IMR-90 (cell line): ENCODE measurements at regions of chr11 and their contacts with region 1.

Region 1: DNA sequence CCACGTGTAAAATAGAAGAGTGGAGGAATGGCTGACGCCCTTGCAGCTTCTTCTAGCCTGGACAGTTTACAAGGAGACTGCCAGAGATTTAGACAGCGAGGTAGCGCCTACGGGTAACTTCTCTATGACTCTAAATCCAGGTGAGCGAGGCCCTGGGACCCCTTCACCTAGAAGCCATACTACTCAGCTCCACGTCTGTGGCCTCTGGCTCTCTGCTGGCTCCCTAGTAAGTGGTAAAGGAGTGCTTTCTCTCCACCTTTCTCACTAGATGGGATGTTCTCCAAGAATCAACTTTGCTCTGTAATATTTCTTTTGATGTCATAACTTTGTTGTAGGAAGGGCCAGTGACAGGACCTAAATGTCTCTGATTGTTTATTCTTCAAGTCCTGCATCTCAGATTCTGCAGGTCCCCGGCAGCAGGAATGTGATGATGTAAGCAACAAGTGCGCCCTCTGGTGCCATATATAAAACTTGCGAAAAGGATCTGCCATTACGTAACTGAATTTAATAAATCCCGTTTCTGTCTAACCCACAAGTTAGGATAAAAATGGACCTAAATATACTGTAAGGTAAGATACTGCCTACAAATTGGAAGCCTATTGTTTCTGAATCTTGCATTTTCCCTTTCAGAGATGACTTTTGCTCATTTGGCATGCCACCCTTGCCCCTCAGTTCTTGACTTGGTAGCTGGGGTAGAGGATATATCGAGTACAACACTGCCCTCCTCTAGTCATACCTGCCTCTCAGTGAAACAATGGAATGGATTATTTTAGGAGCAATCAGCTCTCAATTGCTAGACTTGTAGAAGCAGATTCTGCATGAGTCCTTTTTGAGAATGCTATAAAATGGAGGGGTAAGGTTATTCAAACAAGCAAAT is 11.0 kb upstream of the PTPN5 start:
- DNase-seq: peak; percentile 71
- ATAC-seq: peak; percentile 71
- H3K4me3 ChIP-seq: no peak overlapping the region
- H3K27ac ChIP-seq: no peak overlapping the region
- H3K4me1 ChIP-seq: no peaks in the 10 kb centered on the region
- H3K27me3 ChIP-seq: peaks cover 2% of the 10 kb centered on the region; the same call in 1 of the 2 replicates
- CTCF ChIP-seq: peak; percentile 68
- POLR2A ChIP-seq: no peak
- RAD21 ChIP-seq: peak; percentile 49

Region 2: GRCh38 chr11:18115360-18116127 is 687.1 kb before region 1 on chr11:
- CTCF ChIA-PET with region 1: interaction called, 3 read pairs
- POLR2A ChIA-PET with region 1: no interaction called
- dilution Hi-C with region 1: no loop called
- in situ Hi-C with region 1: no loop called
- intact Hi-C with region 1: loop called (anchors 1 kb)
- DNase-seq: peak; percentile 55
- ATAC-seq: peak; percentile 97
- H3K4me3 ChIP-seq: no peak overlapping the region
- H3K27ac ChIP-seq: no peak overlapping the region
- H3K4me1 ChIP-seq: no peaks in the 10 kb centered on the region
- H3K27me3 ChIP-seq: peaks cover 11% of the 10 kb centered on the region
- CTCF ChIP-seq: peak; percentile 82
- POLR2A ChIP-seq: no peak
- RAD21 ChIP-seq: peak; percentile 80

Region 3: GRCh38 chr11:18775492-18776292 is 26.9 kb before region 1 on chr11:
- CTCF ChIA-PET with region 1: no interaction called
- POLR2A ChIA-PET with region 1: no interaction called
- dilution Hi-C with region 1: no loop called
- in situ Hi-C with region 1: no loop called
- intact Hi-C with region 1: loop called (anchors 1 kb)
- DNase-seq: peak; percentile 31
- ATAC-seq: peak; percentile 66
- H3K4me3 ChIP-seq: no peak overlapping the region
- H3K27ac ChIP-seq: no peak overlapping the region
- H3K4me1 ChIP-seq: no peaks in the 10 kb centered on the region
- H3K27me3 ChIP-seq: peaks cover 34% of the 10 kb centered on the region
- CTCF ChIP-seq: peak; percentile 54
- POLR2A ChIP-seq: no peak
- RAD21 ChIP-seq: peak; percentile 45